Activated CD8-positive, alpha-beta T cell treated with anti-CD3 and anti-CD28 coated beads, Interleukin-2, amount 10 ng/mL, durations not matched to agents 7 days and 5 days (primary cell): ENCODE measurements at regions of chr6 and their contacts with region 1.

Region 1: DNA sequence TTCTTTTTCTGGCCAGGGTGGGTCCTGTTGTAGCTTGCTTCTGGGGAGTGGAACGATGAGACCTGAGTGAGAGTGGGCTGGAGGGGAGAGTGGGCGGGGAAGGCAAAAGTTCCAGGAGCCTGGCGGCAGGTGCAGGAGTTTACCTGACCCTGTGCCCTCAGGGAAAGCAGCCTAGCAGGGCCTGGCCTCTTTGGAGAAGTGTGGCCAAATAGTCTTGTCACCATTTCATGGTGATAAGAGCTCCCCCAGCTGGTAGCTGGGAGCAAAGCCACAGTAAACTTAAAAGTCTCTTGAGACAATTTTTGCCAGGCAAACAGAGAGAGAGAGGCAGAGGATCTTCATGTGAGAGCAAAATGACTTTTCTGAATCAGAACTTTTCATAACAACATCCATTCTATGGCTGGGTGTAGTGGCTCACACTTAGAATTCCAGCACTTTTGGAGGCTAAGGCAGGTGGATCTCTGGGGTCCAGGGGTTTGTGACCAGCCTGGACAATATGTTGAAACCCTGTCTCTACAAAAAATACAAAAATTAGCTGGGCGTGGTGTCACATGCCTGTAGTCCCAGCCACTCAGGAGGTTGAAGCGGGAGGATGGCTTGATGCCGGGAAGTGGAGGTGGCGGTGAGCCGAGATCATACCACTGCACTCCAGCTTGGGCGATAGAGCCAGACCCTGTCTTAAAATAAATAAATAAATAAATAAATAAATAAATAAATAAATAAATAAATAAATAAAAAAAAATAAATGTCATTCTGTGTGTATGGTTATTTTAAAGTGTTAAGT is 161.8 kb upstream of the SCGN start:
- DNase-seq: peak; percentile 80
- ATAC-seq: peak; percentile 91
- H3K4me3 Mint-ChIP-seq: no peak overlapping the region
- H3K27ac Mint-ChIP-seq: peak overlapping the region; percentile 37
- H3K4me1 Mint-ChIP-seq: peaks cover 7% of the 10 kb centered on the region
- H3K27me3 Mint-ChIP-seq: no peaks in the 10 kb centered on the region

Region 2: DNA sequence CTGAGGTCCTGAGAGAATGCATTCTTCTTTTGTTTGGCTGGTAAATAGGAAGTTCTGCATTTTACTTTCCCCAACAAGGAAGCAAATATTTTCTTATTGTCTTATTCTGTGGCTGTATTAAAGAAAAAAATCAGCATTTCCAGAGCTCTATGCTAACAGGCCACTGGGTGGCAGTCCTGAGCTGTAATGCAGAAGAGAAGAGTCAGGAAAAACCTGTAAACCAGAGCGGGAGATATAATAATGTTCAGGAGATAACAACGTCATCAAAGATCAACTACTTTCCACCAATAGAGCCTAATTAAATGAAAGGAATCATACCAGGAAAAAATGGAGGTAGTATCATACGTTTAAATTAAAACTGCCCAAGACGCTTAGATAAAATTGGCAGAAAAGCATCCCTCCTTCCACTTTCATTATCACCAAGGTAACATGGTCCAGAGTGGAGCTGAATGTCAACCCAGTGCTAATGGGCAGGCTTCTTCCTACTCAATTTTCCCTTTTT is 266.7 kb before region 1 on chr6:
- CTCF ChIA-PET with region 1: interaction called, 29 read pairs
- POLR2A ChIA-PET with region 1: no interaction called
- DNase-seq: peak; percentile 75
- ATAC-seq: peak; percentile 49
- H3K4me3 Mint-ChIP-seq: peak overlapping the region; percentile 52
- H3K27ac Mint-ChIP-seq: no peak overlapping the region
- H3K4me1 Mint-ChIP-seq: peaks cover 13% of the 10 kb centered on the region
- H3K27me3 Mint-ChIP-seq: peaks cover 10% of the 10 kb centered on the region

Region 3: GRCh38 chr6:25270559-25270958 is 219.7 kb before region 1 on chr6:
- CTCF ChIA-PET with region 1: interaction called, 233 read pairs
- POLR2A ChIA-PET with region 1: interaction called, 5 read pairs
- DNase-seq: no peak
- ATAC-seq: no peak
- H3K4me3 Mint-ChIP-seq: no peak overlapping the region
- H3K27ac Mint-ChIP-seq: no peak overlapping the region
- H3K4me1 Mint-ChIP-seq: no peaks in the 10 kb centered on the region
- H3K27me3 Mint-ChIP-seq: peaks cover 21% of the 10 kb centered on the region

Region 4: DNA sequence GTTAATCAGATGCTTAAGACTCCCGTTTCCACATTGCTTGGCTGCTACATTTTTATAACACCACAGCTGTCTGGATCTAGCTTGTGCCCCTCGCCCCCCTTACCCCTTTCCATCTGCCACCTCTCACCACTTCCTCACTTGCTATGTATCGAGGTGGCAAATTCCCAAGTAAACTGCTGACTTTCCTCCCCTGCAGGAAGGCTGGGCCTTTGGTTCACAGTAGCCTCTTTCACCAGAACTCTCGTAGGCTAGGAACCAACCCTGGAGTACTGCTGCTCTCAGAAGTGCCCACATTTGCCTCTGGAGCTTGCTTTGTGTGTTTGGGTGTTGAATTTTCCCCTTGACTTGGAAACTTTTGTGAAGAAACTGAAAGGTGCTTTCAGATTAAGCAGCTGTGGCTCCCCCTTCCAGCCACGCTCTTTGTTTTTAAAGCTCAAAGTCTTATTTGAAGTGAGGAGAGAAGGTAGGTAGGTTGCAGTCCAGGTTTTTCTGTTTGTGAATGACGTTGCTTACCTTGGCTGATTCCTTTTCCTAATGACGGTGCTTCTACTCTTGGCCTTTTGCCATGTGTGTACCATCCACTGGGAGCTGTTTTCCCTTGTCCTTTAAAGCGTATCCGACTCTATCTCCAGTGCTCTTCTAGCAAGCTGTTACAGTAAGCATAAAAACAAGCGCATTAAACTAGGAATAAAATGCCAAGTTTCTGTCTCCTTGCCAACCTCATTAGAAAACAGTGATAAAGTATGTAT is 120.6 kb before region 1 on chr6:
- CTCF ChIA-PET with region 1: interaction called, 48 read pairs
- POLR2A ChIA-PET with region 1: no interaction called
- DNase-seq: peak; percentile 39
- ATAC-seq: peak; percentile 22
- H3K4me3 Mint-ChIP-seq: peak overlapping the region; percentile 39
- H3K27ac Mint-ChIP-seq: peak overlapping the region; percentile 81
- H3K4me1 Mint-ChIP-seq: peaks cover 71% of the 10 kb centered on the region
- H3K27me3 Mint-ChIP-seq: no peaks in the 10 kb centered on the region

Region 5: DNA sequence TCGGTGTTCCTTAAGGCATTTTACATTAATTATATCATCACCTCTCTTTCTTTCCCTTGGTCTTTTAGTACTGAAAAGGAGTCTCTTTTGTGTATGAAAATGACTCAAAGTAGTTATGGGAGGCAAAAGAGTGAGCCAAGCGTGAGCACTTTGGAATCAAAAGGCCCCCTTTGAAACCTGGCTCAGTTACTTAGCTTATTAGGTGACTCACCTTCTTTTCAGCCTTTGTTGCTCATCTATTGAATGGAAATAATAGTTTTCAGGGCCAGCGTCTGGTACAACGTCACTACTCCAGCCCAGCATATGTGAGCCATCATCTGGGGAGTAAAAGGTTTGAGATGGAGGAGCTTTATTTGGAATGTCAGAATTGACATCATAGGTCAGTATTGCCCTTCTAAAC is 14.5 kb after region 1 on chr6:
- CTCF ChIA-PET with region 1: interaction called, 24 read pairs
- POLR2A ChIA-PET with region 1: no interaction called
- DNase-seq: no peak
- ATAC-seq: no peak
- H3K4me3 Mint-ChIP-seq: no peak overlapping the region
- H3K27ac Mint-ChIP-seq: no peak overlapping the region
- H3K4me1 Mint-ChIP-seq: no peaks in the 10 kb centered on the region
- H3K27me3 Mint-ChIP-seq: no peaks in the 10 kb centered on the region

Region 6: GRCh38 chr6:25601800-25602673 is 111.8 kb after region 1 on chr6:
- CTCF ChIA-PET with region 1: interaction called, 12 read pairs
- POLR2A ChIA-PET with region 1: no interaction called
- DNase-seq: no peak
- ATAC-seq: no peak
- H3K4me3 Mint-ChIP-seq: no peak overlapping the region
- H3K27ac Mint-ChIP-seq: no peak overlapping the region
- H3K4me1 Mint-ChIP-seq: no peaks in the 10 kb centered on the region
- H3K27me3 Mint-ChIP-seq: no peaks in the 10 kb centered on the region

Region 7: GRCh38 chr6:25637960-25638434 is 147.8 kb after region 1 on chr6:
- CTCF ChIA-PET with region 1: no interaction called
- POLR2A ChIA-PET with region 1: no interaction called
- DNase-seq: no peak
- ATAC-seq: no peak
- H3K4me3 Mint-ChIP-seq: no peak overlapping the region
- H3K27ac Mint-ChIP-seq: no peak overlapping the region
- H3K4me1 Mint-ChIP-seq: no peaks in the 10 kb centered on the region
- H3K27me3 Mint-ChIP-seq: peaks cover 24% of the 10 kb centered on the region